A673 (cell line): ENCODE measurements at regions of chr1 and their contacts with region 1.

Region 1: DNA sequence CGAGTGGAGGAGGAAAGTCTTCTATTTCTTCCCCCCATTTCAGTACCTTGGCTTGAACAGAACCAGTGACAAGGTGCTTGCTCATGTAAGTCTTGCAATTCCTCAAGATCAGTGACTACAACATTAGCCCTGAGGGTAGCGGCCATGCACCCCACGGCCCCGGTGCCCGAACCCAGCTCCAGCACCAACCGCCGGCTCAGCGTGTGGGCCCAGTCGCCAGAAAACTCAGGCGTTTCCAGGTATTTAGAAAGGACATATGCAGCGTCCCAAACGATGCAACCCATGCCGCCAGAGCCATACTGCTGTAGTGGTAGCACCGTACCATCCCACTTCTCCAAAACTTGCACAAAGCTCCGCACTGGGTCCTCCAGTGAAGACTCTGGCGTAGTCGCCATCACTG is 11.2 kb upstream of the MANEAL start:
- DNase-seq: no peak
- H3K4me3 ChIP-seq: no peak overlapping the region
- H3K27ac ChIP-seq: no peak overlapping the region
- H3K4me1 ChIP-seq: no peaks in the 10 kb centered on the region
- H3K27me3 ChIP-seq: peaks cover 64% of the 10 kb centered on the region
- CTCF ChIP-seq: no peak

Region 2: GRCh38 chr1:37840711-37841110 is 58.2 kb after region 1 on chr1:
- CTCF ChIA-PET with region 1: no interaction called
- POLR2A ChIA-PET with region 1: interaction called, 20 read pairs
- intact Hi-C with region 1: no loop called
- DNase-seq: no peak
- H3K4me3 ChIP-seq: no peak overlapping the region
- H3K27ac ChIP-seq: no peak overlapping the region
- H3K4me1 ChIP-seq: no peaks in the 10 kb centered on the region
- H3K27me3 ChIP-seq: no peaks in the 10 kb centered on the region
- CTCF ChIP-seq: no peak

Region 3: DNA sequence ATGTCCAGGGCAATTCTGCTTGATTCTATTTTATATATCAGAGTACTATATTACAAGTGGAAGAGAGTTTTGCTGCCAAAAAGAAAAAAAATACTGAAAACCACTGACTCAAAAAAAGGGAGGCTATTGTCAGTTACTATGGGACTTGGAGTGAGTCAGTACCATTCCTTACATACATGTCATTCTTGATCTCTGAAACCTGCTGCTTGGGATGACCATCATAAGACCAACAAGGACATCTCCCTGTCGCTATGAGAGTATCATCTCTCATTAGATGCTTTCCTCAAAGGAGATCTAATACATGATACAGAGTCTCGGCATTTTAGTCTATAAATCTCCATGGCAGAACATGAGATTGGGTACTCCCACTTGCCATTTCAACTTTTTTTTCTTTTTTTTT is 176.2 kb after region 1 on chr1:
- CTCF ChIA-PET with region 1: no interaction called
- POLR2A ChIA-PET with region 1: no interaction called
- intact Hi-C with region 1: no loop called
- DNase-seq: no peak
- H3K4me3 ChIP-seq: no peak overlapping the region
- H3K27ac ChIP-seq: no peak overlapping the region
- H3K4me1 ChIP-seq: no peaks in the 10 kb centered on the region
- H3K27me3 ChIP-seq: no peaks in the 10 kb centered on the region
- CTCF ChIP-seq: no peak